Common myeloid progenitor, CD34-positive (primary cell): ENCODE measurements at regions of chr3 and their contacts with region 1.

Region 1: DNA sequence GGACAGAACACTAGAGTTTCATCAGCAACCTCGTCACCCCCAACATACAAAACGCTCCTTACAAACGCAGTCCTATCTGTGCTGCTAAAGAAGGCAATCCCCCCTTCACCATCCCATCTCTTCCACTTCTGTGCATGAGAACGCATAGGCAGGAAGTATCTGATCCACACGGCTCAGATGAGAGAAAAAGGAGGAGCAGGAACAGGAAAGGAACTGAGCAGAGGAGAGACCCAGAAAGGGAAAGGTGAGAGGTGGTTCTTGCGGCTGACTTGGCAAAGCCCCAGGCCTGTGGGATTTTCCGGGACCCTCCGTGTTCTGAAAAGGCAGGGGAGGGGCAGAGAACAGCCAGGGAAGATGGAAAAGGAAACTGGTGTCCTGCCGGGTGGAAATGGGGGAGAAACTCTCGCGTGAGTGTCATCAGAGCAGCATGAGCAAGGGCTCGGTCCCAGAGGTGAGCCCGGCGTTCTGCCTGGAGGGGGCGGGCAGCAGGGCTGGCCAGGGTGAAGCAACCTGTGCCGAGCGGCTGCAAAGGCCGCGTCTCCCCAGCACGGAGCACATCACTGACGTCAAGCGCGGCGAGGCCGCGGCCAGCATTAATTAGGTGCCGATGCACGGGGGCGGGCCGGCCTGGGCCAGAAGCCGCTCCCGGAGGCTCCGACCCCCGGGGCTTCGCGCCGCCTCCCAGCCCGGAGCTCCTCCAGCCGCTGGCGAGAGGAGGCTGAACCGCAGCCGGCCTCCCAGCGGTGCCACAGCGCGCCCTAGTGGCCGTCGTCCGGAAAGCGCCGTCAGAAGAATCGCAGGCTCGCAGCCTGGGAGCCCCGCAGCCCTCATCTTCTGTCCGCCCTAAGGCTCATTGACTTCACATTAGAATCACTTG is 35.8 kb downstream of the CPN2 start:
- DNase-seq: peak; percentile 75 to 83 (median 83)
- H3K4me3 ChIP-seq: peak overlapping the region; percentile 23 to 73 (median 53)
- H3K27ac ChIP-seq: no peak overlapping the region
- H3K4me1 ChIP-seq: peaks cover 2 to 52% (median 35%) of the 10 kb centered on the region in 4 experiments
- H3K27me3 ChIP-seq: peaks cover 0 to 20% (median 2%) of the 10 kb centered on the region in 5 experiments

Region 2: DNA sequence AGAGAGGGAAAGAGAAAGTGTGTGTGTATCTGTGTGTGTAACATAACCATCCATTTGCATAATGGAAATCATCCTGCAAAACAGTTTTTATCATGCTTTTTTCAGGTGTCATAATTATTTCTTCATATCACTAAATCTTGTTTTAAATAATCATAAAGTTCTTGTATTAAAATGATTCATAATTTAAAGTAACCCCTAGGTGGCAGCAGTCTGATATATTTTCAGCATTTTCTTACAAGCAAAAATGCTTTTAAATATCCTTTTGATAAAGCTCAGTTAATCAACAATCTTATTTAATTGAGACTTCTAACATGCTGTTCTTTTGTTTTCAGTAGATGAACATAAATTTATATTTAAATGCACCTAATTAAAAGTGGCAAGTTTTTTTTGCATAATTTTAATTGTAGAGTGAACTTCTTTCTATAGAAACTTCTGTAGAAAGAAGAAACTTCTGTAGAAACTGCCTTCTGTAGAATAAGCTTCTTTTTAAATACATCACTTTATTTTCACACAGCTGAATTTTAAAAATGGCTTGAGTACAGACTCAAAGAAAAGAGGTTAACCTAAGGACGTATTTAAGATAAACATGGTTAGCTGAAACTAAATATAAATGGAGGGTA is 649.8 kb before region 1 on chr3:
- CTCF ChIA-PET with region 1: interaction called, 46 read pairs
- POLR2A ChIA-PET with region 1: no interaction called
- DNase-seq: peak; percentile 46 to 80 (median 77)
- H3K4me3 ChIP-seq: no peak overlapping the region
- H3K27ac ChIP-seq: no peak overlapping the region
- H3K4me1 ChIP-seq: peaks cover 0 to 9% (median 0%) of the 10 kb centered on the region in 4 experiments
- H3K27me3 ChIP-seq: no peaks in the 10 kb centered on the region

Region 3: DNA sequence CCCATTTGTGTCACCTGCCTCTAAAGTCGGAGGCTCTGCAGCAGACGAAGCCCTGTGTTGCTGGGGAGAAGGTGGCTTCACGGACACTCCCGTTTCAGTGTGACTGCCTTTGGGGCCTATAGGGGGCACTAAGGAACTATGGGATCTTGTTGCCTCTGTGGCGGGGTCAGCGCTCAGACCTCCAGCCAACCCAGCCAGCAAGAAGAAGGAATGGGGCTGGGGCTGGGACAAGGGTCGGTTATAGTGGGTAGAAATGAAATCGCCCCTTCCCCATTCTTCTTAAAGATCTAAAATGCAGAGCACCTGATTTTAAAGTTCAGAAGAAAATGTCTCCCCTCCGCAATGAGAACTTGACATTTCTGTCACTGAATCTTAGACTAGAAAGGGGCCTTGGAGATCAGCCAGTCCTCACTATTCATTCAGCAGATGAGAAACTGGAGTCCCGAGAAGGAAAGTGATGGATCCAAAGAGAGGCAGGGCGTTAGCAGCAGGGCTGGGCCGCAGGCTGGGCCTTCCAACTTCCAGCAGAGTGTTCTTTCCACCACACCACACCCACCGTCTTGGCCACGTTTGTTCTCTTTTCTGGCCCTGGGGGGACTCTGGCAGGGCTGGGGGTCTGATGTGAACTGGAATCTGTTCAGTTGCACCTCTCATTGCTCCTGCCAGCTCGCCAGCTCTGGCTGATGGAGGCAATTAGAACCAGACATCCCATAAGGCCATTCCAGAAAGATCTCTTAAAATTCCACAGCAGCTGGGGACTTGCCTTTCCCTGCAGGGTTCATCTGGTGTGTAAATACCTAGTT is 526.9 kb before region 1 on chr3:
- CTCF ChIA-PET with region 1: interaction called, 17 read pairs
- POLR2A ChIA-PET with region 1: no interaction called
- DNase-seq: peak; percentile 59 to 70 (median 68)
- H3K4me3 ChIP-seq: no peak overlapping the region
- H3K27ac ChIP-seq: no peak overlapping the region
- H3K4me1 ChIP-seq: peaks cover 0 to 7% (median 3%) of the 10 kb centered on the region in 4 experiments
- H3K27me3 ChIP-seq: peaks cover 0 to 29% (median 4%) of the 10 kb centered on the region in 5 experiments

Region 4: GRCh38 chr3:194134757-194135528 is 180.4 kb before region 1 on chr3:
- CTCF ChIA-PET with region 1: interaction called, 34 read pairs
- POLR2A ChIA-PET with region 1: interaction called, 14 read pairs
- DNase-seq: peak; percentile 91 to 97 (median 95)
- H3K4me3 ChIP-seq: peak overlapping the region in 6 of 7 experiments; percentile 28 to 71 (median 64)
- H3K27ac ChIP-seq: peak overlapping the region in 1 of 2 experiments; percentile 68
- H3K4me1 ChIP-seq: peaks cover 16 to 62% (median 59%) of the 10 kb centered on the region in 4 experiments
- H3K27me3 ChIP-seq: peaks cover 0 to 63% (median 22%) of the 10 kb centered on the region in 5 experiments

Region 5: DNA sequence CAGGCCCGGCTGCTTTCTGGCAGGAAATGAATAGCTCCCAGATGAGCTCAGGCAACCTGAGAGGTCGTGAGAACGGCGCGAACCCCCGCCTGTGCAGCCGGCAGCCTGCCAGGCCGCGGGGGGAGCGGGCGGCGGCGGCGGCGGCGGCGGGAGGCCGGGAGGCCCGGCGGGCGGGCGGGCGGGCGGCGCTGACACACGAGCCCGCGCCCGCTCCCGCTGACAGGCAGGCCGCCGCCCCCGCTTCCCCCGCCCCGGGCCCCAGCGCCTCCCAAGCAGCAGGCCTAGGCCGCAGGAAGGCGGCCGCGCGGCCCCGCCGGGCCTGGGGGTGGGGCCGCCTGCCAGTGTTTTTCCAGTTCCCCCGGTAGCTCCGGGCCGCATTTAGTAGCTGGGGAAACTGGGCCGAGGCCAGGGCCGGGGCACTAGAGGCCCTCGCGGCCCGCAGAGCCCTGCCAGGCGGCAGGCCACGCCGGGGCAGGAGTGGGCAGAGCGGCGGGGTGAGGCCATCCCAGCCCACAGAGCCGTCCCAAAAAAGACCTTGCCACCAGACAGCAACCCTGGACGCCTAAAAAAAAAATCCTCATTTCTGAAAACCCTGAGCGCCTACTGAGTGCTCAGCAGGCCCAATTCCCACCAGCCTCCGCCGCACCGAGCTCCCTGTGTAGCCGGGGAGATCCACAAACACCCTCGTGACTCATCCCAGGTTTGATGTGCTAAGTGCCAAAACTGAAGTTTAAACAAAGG is 173.7 kb before region 1 on chr3:
- CTCF ChIA-PET with region 1: interaction called, 34 read pairs
- POLR2A ChIA-PET with region 1: interaction called, 14 read pairs
- DNase-seq: peak; percentile 64 to 84 (median 79)
- H3K4me3 ChIP-seq: peak overlapping the region in 6 of 7 experiments; percentile 44 to 70 (median 57)
- H3K27ac ChIP-seq: peak overlapping the region in 1 of 2 experiments; percentile 81
- H3K4me1 ChIP-seq: peaks cover 21 to 61% (median 55%) of the 10 kb centered on the region in 4 experiments
- H3K27me3 ChIP-seq: peaks cover 0 to 32% (median 0%) of the 10 kb centered on the region in 5 experiments

Region 6: DNA sequence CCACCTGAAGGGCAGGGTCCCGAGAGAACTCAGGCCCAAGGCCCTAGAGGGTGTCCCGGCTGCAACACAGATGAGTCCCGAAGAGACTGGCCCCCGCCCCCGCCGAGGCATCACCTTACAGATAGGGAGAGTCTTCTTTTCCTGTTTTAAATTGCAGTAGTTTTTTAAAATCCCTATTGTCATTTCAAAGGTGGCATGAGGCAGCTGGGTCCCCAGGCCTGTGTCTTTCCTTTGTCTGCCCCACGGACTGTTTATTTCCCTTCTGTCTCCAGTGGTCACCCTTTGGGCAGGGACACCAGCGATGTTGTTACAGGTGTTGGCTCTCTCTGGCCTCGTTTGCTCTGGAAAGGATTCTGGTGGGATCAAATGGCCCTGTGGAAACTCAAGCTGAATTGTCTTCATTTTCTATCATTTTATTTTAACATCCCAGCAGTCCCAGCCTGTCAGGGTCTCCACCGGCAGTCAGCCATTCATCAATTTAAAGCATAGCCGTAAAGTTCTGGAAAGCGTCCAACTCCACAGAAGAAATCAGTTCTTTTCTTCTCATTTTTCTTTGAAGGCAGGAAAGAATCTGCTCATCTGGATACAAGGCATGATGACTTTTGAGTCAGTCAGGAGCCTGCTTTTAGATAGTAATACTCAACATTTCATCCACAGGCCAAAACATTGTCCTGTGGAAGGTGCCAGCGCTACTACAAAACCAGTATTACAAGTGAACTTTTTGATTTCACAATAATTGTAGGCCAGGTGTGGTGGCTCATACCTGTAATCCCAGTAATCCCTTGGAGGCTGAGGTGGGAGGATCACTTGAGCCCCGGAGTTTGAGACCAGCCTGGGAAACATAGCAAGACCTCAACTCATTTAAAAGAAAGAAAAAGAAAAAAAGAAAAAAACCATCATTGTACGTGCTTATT is 83.1 kb before region 1 on chr3:
- CTCF ChIA-PET with region 1: no interaction called
- POLR2A ChIA-PET with region 1: no interaction called
- DNase-seq: no peak
- H3K4me3 ChIP-seq: no peak overlapping the region
- H3K27ac ChIP-seq: no peak overlapping the region
- H3K4me1 ChIP-seq: peaks cover 0 to 7% (median 0%) of the 10 kb centered on the region in 4 experiments
- H3K27me3 ChIP-seq: no peaks in the 10 kb centered on the region

Region 7: GRCh38 chr3:194272861-194273742 is 42.2 kb before region 1 on chr3:
- CTCF ChIA-PET with region 1: interaction called, 10 read pairs
- POLR2A ChIA-PET with region 1: no interaction called
- DNase-seq: no peak
- H3K4me3 ChIP-seq: no peak overlapping the region
- H3K27ac ChIP-seq: no peak overlapping the region
- H3K4me1 ChIP-seq: peaks cover 0 to 37% (median 21%) of the 10 kb centered on the region in 4 experiments
- H3K27me3 ChIP-seq: no peaks in the 10 kb centered on the region